Breast epithelium (tissue), 4 donors: ENCODE measurements at regions of chr1 and their contacts with region 1.

Region 1: DNA sequence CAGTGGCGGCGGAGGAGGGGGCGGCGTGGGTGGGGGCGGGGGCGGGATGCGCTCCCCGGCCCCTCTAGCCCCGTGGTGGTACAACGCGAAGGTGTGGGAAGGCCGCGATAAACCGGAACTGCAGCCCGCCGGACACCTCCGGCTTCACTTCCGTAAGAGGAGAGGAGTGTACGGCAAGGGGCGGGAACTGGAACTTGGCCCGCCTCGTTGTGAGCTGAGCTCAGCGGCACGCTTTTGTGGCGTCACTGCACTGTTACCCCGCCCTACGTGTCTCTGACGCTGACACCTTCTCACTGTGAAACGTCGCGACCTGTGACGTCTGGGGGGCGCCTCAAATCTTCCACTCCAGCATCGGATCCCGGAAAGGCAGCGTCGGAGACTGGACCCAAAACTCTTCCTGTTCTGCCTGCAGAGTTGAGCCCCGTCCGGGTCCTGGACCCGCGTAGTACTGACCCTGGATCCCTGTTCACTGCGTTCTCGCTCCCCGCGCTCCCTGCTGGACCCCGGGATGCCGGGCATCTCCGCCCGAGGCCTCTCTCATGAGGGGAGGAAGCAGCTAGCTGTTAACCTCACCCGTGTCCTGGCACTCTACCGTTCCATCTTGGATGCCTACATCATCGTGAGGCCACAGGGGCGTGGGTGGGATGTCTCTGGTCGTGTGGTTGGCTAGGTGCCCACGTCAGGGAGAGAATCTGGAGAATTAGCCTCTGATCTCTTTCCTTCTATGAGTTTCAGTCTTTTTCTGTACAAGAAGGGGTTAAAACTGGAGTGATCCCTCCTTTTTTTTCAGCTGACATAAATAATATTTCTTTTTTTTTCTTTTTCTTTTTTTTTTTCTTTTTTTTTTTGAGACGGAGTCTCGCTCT is at the start of gene ISG20L2:
- DNase-seq: peak; percentile 97 to 98
- H3K4me3 ChIP-seq: peak within 1 kb of the TSS; percentile 88 to 96 (median 90)
- H3K27ac ChIP-seq: peak within 1 kb of the TSS; percentile 97 to 99
- H3K4me1 ChIP-seq: peaks cover 11 to 26% of the 10 kb centered on the region in 2 donors
- H3K27me3 ChIP-seq: no peaks in the 10 kb centered on the region
- CTCF ChIP-seq: no peak
- POLR2A ChIP-seq: peak; percentile 60
- total RNA-seq, gene ISG20L2: 13.6 to 25.2 (median 21.0) TPM

Region 2: DNA sequence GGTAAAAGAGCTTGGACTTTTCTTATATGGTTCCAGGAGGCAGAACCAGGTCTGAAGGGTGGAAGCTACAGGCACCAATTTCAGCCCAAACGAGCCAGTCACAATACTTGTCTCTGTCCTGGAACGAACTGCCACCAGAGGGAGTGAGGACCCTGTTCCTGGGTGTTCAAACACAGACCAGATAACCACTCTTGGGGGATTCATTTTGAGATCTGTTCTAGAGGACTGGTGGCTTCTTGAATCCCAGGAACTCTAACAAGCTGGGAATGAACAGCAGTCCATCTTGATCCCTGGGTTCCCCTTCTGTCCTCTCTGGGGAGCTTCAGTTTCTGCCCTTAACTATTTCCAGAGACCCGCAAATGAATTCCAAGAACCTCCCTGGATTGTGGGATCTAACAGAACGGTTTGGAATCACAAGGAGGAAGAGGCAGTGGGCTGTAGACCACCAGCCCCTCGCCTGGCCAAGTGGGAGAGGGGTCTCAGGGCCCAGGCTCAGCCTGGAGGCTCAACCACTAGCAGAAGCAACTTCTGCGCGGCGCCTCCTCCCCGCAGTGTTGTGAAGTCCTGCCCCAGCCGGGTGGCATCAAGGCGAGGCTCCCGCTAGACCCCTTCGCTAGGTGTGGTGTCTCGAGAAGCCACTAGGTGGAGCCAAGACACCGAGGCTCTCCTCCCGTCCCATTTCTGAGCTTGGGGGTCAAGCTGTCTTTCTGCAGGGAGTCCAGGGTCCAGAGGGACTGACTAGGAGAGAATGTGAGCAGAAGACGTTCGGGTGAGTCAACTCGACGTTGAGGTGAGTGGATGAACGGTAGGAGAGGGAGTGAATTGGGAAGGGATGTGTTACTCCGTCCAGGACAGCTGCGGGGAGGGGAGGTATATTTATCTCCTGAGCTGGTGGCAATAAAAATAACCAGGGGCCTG is 39.5 kb before region 1 on chr1:
- intact Hi-C with region 1: loop called (anchors 2 kb)
- DNase-seq: peak; percentile 72 to 83
- H3K4me3 ChIP-seq: peak overlapping the region in 2 of 3 donors; percentile 1 to 56
- H3K27ac ChIP-seq: peak overlapping the region; percentile 26 to 90
- H3K4me1 ChIP-seq: peaks cover 21 to 43% of the 10 kb centered on the region in 2 donors
- H3K27me3 ChIP-seq: no peaks in the 10 kb centered on the region
- CTCF ChIP-seq: peak; percentile 86 to 98 (median 91)
- POLR2A ChIP-seq: no peak

Region 3: GRCh38 chr1:156860113-156860627 is 131.3 kb after region 1 on chr1:
- intact Hi-C with region 1: loop called (anchors 10 kb)
- DNase-seq: no peak
- H3K4me3 ChIP-seq: peak overlapping the region; percentile 30 to 64 (median 47)
- H3K27ac ChIP-seq: peak overlapping the region in 1 of 2 donors; percentile 63
- H3K4me1 ChIP-seq: peaks cover 7 to 14% of the 10 kb centered on the region in 2 donors
- H3K27me3 ChIP-seq: peaks cover 0 to 67% of the 10 kb centered on the region in 2 donors
- CTCF ChIP-seq: peak; percentile 41 to 65 (median 62)
- POLR2A ChIP-seq: no peak